HEK293 (cell line): ENCODE measurements at regions of chr6 and their contacts with region 1.

Region 1: DNA sequence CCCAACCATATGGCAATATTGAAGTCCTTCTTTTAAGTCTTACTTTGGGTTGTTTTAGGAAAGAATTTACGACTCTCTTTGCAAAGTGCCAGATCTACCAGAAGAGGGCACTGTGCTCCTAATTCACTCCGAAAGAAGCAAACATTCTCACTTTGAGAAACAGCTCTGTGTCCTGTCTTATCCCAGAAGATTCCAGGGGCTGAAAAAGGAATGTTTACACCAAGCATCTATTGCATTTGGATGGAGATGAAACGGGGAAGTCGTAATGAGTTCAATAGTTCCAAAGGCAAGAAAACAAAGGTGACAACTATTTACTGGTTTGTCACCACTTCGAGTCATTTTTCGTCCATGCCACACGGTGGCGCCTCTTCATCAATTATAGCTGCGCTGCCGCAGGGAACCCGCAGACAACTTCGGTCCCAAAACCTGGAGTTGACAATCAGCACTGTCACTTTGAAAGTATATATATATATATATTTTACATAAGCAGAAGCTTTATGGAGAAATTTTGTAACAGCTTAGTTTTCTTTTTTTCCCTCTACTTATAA is 121.6 kb downstream of the MOXD1 start:
- H3K4me3 ChIP-seq: peak overlapping the region; percentile 46
- H3K27ac ChIP-seq: no peak overlapping the region
- H3K4me1 ChIP-seq: no peaks in the 10 kb centered on the region
- CTCF ChIP-seq: peak; percentile 85

Region 2: DNA sequence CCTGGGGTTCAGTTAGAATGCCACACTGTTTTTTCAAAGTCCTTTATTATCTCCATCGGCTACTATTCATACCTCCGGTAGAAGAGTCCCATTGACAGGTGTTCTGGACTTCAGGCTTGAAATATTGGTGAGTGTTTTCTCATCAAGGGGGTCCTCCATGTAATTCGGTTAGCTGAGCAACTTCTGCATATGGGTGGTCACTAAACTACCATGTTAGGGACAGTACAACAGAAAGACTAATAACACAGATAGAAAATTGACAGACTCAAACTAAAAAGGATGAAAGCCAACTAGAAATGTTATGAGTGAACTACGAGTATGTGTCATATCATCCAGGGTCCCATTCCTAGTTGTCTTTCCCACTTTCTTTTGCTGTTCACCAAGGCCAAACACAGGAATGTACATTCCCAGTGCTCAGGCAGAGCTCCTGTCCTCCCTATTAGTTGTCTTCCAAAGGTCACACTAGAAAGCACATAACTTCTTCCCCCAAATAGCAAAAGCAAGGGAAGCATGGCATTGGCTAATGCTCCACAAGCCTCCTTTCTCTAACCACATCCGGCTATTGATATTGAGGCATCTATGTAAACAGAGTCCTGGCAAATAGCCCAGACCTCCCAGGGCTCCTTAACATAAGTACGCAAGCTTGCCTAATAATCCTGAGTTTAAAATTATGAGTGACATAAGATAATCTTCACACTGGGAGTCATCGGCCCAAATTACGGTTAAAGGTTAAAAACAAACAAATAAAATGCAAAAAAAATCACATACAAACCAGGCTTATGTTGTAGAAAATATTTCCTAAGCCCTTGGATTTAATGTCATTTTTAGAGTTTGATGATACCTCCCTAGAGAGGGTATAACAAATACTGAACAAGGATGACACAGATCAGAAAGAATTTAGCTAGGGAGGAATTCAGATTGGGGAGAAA is 341.7 kb before region 1 on chr6:
- CTCF ChIA-PET with region 1: interaction called, 19 read pairs
- POLR2A ChIA-PET with region 1: no interaction called
- H3K4me3 ChIP-seq: no peak overlapping the region
- H3K27ac ChIP-seq: no peak overlapping the region
- H3K4me1 ChIP-seq: no peaks in the 10 kb centered on the region
- CTCF ChIP-seq: no peak

Region 3: DNA sequence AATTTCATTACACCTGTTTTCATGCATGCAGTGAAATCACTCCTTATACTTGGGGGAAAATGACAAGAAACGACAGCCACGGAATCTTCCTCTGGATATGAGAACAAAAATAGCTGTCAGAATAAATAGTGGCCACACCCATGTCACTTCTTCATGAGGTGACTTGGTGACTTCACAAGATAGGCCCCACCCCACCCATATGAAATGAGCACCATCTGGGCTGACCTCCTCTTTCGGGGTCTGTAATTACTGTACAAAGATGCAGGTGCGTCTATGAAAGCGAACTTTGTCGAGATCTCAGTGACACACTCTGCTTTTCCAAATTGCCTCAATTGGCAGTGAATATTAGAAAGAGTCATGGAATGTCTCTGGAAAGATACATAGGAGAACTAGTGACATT is 144.3 kb before region 1 on chr6:
- CTCF ChIA-PET with region 1: no interaction called
- POLR2A ChIA-PET with region 1: no interaction called
- H3K4me3 ChIP-seq: no peak overlapping the region
- H3K27ac ChIP-seq: no peak overlapping the region
- H3K4me1 ChIP-seq: peaks cover 5% of the 10 kb centered on the region; the same call in 1 of the 2 replicates
- CTCF ChIP-seq: no peak

Region 4: DNA sequence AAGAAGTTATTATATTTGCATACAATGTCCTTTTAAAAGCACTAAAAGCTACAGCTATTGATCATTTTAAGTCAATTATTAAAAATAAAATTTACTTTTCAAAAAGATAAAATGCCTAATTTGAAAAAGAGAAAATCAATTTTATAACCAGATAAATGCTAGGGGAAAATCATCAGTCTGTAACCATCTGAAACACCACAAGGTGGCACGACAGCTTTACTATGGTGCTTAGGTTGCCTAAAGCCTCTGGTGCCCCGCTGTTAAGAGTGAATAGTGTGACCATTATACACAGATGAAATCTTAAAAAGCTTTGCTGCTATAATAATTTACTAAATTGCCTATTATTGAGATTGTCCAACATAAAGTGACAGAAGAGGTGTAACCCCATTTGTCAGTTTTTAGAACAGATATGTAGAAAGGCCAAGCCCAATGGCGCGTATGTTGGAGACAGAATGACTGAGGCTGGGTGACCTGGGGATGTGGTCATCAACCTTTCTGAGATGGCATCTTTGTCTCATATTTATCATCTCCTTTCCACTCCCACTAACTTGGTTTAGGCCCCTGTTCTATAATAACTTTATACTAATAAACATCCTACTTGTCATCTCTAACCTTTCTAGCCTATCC is 20.8 kb after region 1 on chr6:
- CTCF ChIA-PET with region 1: interaction called, 629 read pairs
- POLR2A ChIA-PET with region 1: no interaction called
- H3K4me3 ChIP-seq: no peak overlapping the region
- H3K27ac ChIP-seq: no peak overlapping the region
- H3K4me1 ChIP-seq: no peaks in the 10 kb centered on the region
- CTCF ChIP-seq: no peak

Region 5: DNA sequence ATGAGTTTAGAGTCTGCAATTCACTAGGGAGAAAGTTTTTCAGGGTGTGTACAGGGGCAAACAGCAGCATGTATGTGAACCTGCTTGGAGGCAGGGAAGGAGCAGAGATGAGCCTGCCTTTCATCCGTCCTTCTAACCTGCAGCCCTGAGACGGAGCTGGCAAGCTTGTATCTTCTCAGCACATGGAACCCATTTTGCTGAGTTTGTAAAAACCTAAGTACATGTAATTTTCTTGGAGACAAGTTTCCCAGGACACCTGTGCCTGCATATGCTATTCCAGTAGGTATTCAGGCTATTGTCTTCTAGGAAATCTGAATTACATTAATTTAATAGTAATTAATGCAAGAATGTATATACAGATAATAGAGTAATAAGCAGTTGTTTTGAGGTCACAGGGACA is 150.4 kb after region 1 on chr6:
- CTCF ChIA-PET with region 1: interaction called, 12 read pairs
- POLR2A ChIA-PET with region 1: no interaction called
- H3K4me3 ChIP-seq: no peak overlapping the region
- H3K27ac ChIP-seq: no peak overlapping the region
- H3K4me1 ChIP-seq: no peaks in the 10 kb centered on the region
- CTCF ChIP-seq: no peak

Region 6: GRCh38 chr6:132490024-132490423 is 210.4 kb after region 1 on chr6:
- CTCF ChIA-PET with region 1: interaction called, 289 read pairs
- POLR2A ChIA-PET with region 1: interaction called, 3 read pairs
- H3K4me3 ChIP-seq: no peak overlapping the region
- H3K27ac ChIP-seq: no peak overlapping the region
- H3K4me1 ChIP-seq: no peaks in the 10 kb centered on the region
- CTCF ChIP-seq: no peak

Region 7: DNA sequence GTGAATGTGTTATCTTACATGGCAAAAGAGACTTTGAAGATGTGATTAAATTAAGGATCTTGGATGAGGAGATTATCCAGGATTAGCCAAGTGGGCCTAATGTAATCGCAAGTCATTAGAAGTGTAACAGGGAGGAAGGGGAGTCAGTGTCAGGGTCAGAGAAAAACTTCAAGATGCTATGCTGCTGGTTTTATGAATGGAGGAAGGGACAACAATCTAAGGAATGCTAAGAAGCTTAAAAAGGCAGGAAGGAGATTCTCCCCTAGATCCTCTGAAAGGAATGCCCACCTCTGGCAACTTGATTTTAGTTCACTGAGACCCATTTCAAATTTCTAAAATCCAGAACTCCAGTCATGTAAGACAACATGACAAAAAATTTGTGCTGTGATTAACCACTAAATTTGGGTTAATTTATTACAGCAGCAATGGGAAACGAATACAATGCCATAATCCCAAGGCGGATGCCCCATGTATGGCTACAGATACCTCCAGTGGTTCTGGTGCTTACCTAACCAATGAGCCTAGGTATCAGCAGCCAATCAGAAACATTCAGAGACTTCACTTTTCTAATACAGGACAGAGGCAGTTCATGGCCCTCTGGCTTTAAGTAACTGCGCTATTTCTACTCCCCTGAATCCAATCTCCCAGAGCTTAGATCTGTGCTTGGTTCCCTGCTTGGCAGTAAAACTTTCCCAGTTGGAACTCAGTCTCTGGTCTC is 269.2 kb after region 1 on chr6:
- CTCF ChIA-PET with region 1: interaction called, 10 read pairs
- POLR2A ChIA-PET with region 1: no interaction called
- H3K4me3 ChIP-seq: no peak overlapping the region
- H3K27ac ChIP-seq: no peak overlapping the region
- H3K4me1 ChIP-seq: no peaks in the 10 kb centered on the region
- CTCF ChIP-seq: no peak